ENCODE measurements at regions of chr6 and their contacts with region 1.

Region 1: DNA sequence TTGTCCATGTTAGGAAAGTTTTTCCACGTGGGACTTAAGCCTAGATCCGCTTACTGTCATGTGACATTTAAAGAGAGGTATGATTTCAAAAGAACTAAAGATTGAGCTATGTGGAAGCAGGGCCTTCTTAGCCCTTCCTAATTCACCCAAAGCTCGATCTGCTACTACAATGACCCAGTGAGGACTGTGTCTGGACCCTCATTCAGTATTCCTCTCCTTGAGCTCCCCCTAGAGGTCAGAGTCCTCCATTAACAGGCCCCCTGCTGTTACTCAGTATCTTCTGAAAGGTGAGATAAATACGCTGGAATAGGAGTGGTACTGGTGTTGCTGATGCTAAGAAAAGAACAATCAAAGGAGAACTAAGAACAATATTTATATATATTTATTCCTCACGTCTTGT is 414.0 kb downstream of the GJA1 start:
- DNase-seq: peak; percentile 73
- ATAC-seq: peak; percentile 95
- H3K4me3 ChIP-seq: no peak overlapping the region
- H3K27ac ChIP-seq: no peak overlapping the region
- H3K4me1 ChIP-seq: peaks cover 6% of the 10 kb centered on the region
- H3K27me3 ChIP-seq: no peaks in the 10 kb centered on the region
- CTCF ChIP-seq: peak; percentile 91
- POLR2A ChIP-seq: no peak
- RAD21 ChIP-seq: peak; percentile 96

Region 2: DNA sequence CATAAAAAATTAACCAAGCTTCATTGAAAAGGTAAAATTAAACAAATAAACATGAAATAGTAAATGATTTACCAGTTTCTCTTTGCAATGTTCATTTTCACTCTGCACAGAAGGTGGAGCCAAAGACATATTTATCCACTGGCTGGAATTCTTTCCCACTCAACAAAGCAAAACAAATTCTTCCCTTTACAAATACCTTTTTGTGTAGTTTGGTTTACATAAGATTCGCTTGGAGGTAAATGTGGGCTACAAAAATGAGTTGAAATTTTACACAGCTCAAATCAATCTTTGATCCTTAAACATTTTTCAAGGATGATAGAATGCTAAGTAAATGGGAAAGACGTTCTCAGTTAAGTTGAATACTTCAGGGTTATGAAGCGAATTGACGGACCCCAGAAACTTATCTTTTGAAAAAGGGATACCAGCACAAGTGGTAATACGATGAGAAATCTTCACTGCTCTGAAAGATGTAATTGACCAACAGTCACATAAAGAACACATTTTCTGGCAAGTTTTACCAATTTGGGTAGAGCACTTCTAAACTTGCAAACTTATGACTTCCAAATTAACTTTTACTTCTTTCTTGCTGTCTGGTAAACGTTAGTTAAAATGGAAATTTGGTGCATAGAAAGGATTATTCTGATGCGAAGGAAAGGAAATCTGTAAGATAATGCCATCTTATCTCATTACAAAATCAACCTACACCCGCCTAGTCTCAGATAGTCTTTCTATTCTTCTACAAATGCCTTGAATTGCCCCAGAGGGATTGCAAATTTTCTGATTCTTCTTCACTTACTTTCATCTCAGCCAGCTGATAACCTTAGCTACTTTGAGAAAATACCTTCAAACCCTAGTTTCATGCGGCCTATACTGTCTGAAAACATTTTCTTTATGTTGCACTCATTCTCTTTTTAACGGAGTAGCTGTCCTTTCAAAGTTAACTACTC is 418.7 kb before region 1 on chr6:
- CTCF ChIA-PET with region 1: interaction called, 12 read pairs
- POLR2A ChIA-PET with region 1: no interaction called
- dilution Hi-C with region 1: no loop called
- in situ Hi-C with region 1: loop called (anchors 5 kb)
- intact Hi-C with region 1: loop called (anchors 1 kb)
- DNase-seq: peak; percentile 54
- ATAC-seq: 0 out of 2 replicates have a peak, but pooled peaks have one; percentile 41
- H3K4me3 ChIP-seq: no peak overlapping the region
- H3K27ac ChIP-seq: no peak overlapping the region
- H3K4me1 ChIP-seq: peaks cover 2% of the 10 kb centered on the region; the same call in 1 of the 2 replicates
- H3K27me3 ChIP-seq: no peaks in the 10 kb centered on the region
- CTCF ChIP-seq: peak; percentile 94
- POLR2A ChIP-seq: no peak; the same call in 1 of the 2 replicates
- RAD21 ChIP-seq: peak; percentile 97

Region 3: DNA sequence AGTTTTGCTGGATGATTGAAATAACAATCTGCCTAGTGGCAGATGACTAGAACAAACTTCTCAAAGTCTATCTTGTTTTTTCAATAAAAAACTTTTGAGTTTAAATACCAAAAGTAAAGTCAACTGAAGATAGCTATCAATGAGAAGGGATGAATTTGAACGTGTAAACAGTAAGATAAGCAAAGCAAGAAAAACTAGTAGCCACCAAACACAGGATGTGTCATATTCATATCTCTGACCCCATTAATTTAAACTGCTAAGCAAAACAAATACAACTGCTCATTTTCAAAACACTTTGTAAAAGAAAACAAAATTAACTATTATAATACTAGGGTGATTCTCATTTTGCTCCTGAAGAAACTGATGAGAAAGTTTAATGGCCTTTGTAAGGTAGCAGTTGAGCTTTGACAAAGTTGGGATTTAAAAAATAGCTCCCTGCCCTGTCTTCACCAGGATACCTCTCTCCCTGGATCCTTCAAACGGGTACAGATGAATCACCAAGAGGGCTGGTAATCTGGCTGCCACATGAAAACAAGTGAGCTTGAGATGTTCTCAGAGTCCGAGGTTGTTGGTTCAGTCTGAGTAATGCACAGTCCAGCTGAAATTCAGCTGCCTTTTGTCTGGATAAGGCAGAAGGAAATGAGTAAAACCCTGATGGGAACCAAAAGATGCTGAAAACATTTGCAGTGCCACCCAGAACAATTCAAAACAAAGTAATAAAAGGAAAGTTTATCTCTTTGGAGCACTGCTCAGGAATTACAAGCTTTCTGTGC is 327.4 kb before region 1 on chr6:
- CTCF ChIA-PET with region 1: interaction called, 4 read pairs
- POLR2A ChIA-PET with region 1: no interaction called
- dilution Hi-C with region 1: no loop called
- in situ Hi-C with region 1: no loop called
- intact Hi-C with region 1: loop called (anchors 5 kb)
- DNase-seq: peak; percentile 96
- ATAC-seq: peak; percentile 74
- H3K4me3 ChIP-seq: peak overlapping the region; percentile 29; the same call in 1 of the 2 replicates
- H3K27ac ChIP-seq: peak overlapping the region; percentile 100
- H3K4me1 ChIP-seq: peaks cover 18% of the 10 kb centered on the region
- H3K27me3 ChIP-seq: no peaks in the 10 kb centered on the region
- CTCF ChIP-seq: no peak
- POLR2A ChIP-seq: no peak
- RAD21 ChIP-seq: peak; percentile 22

Region 4: GRCh38 chr6:121694389-121695251 is 154.9 kb before region 1 on chr6:
- CTCF ChIA-PET with region 1: no interaction called
- POLR2A ChIA-PET with region 1: no interaction called
- dilution Hi-C with region 1: no loop called
- in situ Hi-C with region 1: no loop called
- intact Hi-C with region 1: loop called (anchors 5 kb)
- DNase-seq: peak; percentile 45
- ATAC-seq: no peak
- H3K4me3 ChIP-seq: no peak overlapping the region
- H3K27ac ChIP-seq: 0 out of 2 replicates have a peak overlapping the region, but pooled peaks have one; percentile 40
- H3K4me1 ChIP-seq: peaks cover 19% of the 10 kb centered on the region
- H3K27me3 ChIP-seq: no peaks in the 10 kb centered on the region
- CTCF ChIP-seq: no peak
- POLR2A ChIP-seq: no peak
- RAD21 ChIP-seq: no peak

Region 5: GRCh38 chr6:121944354-121944753 is 94.9 kb after region 1 on chr6:
- CTCF ChIA-PET with region 1: no interaction called
- POLR2A ChIA-PET with region 1: no interaction called
- dilution Hi-C with region 1: no loop called
- in situ Hi-C with region 1: no loop called
- intact Hi-C with region 1: no loop called
- DNase-seq: peak; percentile 6
- ATAC-seq: no peak
- H3K4me3 ChIP-seq: no peak overlapping the region
- H3K27ac ChIP-seq: no peak overlapping the region
- H3K4me1 ChIP-seq: no peaks in the 10 kb centered on the region
- H3K27me3 ChIP-seq: no peaks in the 10 kb centered on the region
- CTCF ChIP-seq: no peak
- POLR2A ChIP-seq: no peak
- RAD21 ChIP-seq: no peak

Region 6: DNA sequence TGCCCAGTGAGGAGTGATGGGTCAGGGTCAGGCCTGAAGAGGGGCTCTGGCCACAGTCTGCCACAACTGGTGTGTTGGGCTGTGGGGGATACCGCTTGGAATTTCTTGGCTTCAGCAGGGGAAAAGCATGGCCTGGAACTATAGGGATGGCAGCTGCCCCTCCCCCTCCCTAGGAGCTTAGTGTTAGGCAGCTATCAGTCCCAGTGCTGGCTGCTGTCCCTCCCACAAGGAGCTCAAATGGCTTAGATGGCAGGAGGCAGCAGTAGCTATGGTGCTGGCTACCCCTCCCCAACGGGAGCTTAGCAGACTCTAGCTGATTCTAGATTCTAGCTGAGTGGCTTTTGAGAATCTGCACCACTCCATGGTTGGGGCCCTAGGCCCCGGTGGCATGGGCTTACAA is 135.5 kb after region 1 on chr6:
- CTCF ChIA-PET with region 1: no interaction called
- POLR2A ChIA-PET with region 1: no interaction called
- dilution Hi-C with region 1: no loop called
- in situ Hi-C with region 1: no loop called
- intact Hi-C with region 1: no loop called
- DNase-seq: no peak
- ATAC-seq: no peak
- H3K4me3 ChIP-seq: no peak overlapping the region
- H3K27ac ChIP-seq: no peak overlapping the region
- H3K4me1 ChIP-seq: no peaks in the 10 kb centered on the region
- H3K27me3 ChIP-seq: no peaks in the 10 kb centered on the region
- CTCF ChIP-seq: no peak
- POLR2A ChIP-seq: no peak
- RAD21 ChIP-seq: no peak

Region 7: DNA sequence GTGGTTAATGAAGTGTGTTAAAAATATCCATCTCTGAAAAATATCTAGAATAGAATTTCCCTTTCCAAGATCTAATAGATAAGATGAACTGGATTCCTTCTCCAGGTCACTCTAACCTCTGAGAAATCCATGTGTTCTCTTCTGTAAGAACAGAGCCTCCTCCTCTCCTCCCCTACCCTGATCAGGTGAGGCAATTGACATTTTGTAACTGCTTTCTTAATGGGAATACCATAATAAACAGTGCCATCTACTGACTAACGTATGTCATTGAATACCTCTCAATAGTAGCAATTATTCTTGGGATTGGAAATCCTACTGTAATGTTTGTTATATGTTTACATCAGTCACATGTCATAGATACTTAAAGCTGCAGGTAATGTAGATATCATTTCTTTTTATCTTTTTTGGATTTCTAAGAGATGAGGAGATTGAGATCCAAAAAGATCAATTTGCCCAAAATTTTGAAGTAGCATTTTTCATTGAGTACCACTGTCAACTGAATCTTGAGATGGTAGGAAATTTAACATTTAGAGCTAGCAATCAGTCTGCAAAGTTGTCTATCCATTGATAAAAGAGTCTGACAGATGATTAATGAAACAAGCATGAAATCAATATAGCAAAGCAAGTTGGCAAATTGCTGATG is 184.2 kb after region 1 on chr6:
- CTCF ChIA-PET with region 1: interaction called, 5 read pairs
- POLR2A ChIA-PET with region 1: no interaction called
- dilution Hi-C with region 1: no loop called
- in situ Hi-C with region 1: loop called (anchors 10 kb)
- intact Hi-C with region 1: loop called (anchors 1 kb)
- DNase-seq: peak; percentile 70
- ATAC-seq: peak; percentile 88
- H3K4me3 ChIP-seq: no peak overlapping the region
- H3K27ac ChIP-seq: no peak overlapping the region
- H3K4me1 ChIP-seq: no peaks in the 10 kb centered on the region
- H3K27me3 ChIP-seq: no peaks in the 10 kb centered on the region
- CTCF ChIP-seq: peak; percentile 76
- POLR2A ChIP-seq: no peak
- RAD21 ChIP-seq: peak; percentile 89

Region 8: GRCh38 chr6:122930252-122931180 is 1081.0 kb after region 1 on chr6:
- CTCF ChIA-PET with region 1: no interaction called
- POLR2A ChIA-PET with region 1: no interaction called
- dilution Hi-C with region 1: no loop called
- in situ Hi-C with region 1: no loop called
- intact Hi-C with region 1: no loop called
- DNase-seq: no peak
- ATAC-seq: no peak
- H3K4me3 ChIP-seq: no peak overlapping the region
- H3K27ac ChIP-seq: no peak overlapping the region
- H3K4me1 ChIP-seq: no peaks in the 10 kb centered on the region
- H3K27me3 ChIP-seq: no peaks in the 10 kb centered on the region
- CTCF ChIP-seq: no peak
- POLR2A ChIP-seq: no peak
- RAD21 ChIP-seq: no peak